ENCODE measurements at regions of chr14 and their contacts with region 1.

Region 1: DNA sequence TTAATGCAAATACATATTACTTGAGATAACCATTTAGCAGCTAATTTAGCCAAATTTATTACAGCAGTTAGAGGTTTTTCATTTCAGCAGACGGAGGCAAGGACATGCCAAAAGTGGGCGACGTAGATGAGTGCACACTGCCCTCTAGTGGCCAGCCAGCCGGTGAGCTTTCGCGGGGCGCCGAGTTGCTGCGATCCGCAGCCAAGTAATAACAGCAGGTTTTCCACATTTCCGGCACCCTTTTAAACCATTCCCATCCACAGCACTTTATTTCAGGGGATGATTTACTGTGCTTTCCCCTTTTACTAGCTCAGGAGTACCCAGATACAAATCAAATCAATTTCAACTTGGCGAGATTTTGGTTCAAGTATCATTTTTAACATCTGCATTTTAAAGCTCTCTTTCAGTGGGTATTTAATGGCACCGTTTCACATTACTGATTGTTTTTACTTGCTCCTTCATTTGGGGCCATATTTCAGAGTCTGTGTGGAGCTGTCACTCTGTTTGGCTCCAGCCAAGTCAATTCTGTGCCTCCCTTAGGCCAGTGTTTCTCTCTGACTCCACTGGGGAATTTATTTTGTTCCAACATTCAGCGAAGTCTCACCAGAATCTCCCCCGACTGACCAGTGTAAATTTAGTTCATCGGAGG is 158.0 kb downstream of the EGLN3 start:
- DNase-seq: peak; percentile 73
- CTCF ChIP-seq: peak; percentile 95

Region 2: DNA sequence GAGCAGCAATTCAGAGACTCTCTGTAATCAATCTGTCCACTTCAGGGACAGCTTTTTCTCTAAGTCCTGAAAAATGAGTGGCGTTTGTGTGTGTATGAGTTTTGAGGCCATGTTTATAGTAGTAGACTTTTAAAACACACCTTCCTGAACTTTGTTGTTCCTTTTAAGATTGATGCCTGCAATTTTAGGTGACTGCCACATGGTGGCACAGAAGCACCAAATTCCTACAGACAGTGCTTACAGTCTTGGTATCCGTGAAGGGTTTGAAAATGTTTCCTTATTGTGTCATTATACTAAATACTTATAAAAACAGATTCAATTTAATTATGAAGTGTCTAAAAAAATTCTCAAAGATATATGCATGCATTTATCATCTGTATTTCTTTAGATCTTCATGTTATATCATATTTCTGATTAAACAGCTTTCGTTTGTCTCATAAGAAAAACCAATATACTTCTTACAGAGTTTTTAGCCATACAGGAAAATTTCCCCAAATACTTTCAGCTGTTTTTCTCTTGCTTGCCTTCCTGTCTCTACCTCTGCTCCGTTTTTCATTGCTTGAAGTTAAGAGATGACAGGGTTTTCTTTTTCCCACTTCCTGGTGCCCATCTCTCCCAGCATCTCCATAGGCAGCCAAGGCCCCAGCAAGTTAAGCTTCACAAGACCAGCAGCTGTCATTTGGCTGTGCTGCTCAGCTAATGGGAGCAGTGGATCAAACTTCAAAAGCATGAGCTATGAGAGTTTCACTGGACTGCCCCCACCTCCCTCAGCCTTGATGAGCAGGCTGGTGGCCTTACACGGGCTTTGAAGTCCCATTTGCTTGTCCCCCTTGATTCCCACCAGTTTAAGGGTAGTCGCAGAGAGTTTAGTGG is 1204.2 kb before region 1 on chr14:
- in situ Hi-C with region 1: loop called (anchors 10 kb)
- DNase-seq: peak; percentile 44
- CTCF ChIP-seq: peak; percentile 86

Region 3: DNA sequence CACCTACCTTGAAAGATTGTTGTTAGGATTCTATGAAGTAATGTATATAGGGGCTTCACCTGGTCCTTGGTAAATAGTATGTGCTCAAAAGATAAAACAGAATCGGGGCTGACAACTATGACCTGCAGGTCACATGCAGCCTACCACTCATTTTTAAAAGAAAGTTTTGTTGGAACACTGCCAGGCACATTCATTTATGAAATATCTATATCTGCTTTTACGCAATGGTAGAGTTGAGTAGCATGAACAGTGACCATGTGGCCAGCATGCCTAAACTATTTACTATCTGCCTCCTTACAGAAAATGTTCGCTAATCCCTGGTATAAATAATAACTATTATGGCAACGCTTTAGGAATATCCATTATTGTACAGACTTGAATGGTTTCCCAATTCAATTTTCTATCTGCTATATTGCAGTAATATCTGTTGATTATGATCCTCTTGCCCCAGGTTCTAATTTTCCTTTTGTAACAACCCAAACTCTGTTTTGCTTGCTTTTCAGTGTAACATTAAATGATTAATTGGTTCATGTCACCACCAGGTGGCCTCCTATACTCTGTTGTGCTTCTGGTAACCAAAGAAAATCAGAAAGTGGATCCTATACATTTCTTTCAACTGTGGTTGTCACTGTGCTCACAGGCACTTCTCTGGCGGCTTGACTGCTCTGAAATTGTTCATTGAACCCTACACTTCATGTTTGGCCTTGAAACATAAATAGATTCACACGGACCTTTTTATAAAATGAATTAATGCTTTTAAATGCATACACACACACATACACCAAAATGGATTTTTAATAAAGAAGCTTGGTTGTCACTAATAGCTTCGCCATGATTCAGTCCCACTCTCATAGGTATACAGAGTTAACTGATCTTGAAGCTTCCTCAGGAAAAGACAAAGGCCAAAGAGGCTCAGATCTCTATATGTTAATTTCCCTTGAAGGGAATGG is 1081.8 kb before region 1 on chr14:
- in situ Hi-C with region 1: loop called (anchors 25 kb)
- DNase-seq: peak; percentile 34
- CTCF ChIP-seq: peak; percentile 60